Mammary epithelial cell (primary cell): ENCODE measurements at regions of chr16 and their contacts with region 1.

Region 1: GRCh38 chr16:21708533-21709115 is 44.9 kb downstream of the OTOA start:
- DNase-seq: peak; percentile 60
- H3K4me3 ChIP-seq: no peak overlapping the region
- H3K27ac ChIP-seq: no peak overlapping the region
- H3K4me1 ChIP-seq: peaks cover 9% of the 10 kb centered on the region
- H3K27me3 ChIP-seq: no peaks in the 10 kb centered on the region
- CTCF ChIP-seq: peak; percentile 81 to 89

Region 2: GRCh38 chr16:21584817-21585216 is 123.8 kb before region 1 on chr16:
- CTCF ChIA-PET with region 1: no interaction called
- dilution Hi-C with region 1: no loop called
- in situ Hi-C with region 1: loop called (anchors 10 kb)
- intact Hi-C with region 1: loop called (anchors 1 kb)
- DNase-seq: no peak
- H3K4me3 ChIP-seq: no peak overlapping the region
- H3K27ac ChIP-seq: no peak overlapping the region
- H3K4me1 ChIP-seq: no peaks in the 10 kb centered on the region
- H3K27me3 ChIP-seq: no peaks in the 10 kb centered on the region
- CTCF ChIP-seq: no peak

Region 3: DNA sequence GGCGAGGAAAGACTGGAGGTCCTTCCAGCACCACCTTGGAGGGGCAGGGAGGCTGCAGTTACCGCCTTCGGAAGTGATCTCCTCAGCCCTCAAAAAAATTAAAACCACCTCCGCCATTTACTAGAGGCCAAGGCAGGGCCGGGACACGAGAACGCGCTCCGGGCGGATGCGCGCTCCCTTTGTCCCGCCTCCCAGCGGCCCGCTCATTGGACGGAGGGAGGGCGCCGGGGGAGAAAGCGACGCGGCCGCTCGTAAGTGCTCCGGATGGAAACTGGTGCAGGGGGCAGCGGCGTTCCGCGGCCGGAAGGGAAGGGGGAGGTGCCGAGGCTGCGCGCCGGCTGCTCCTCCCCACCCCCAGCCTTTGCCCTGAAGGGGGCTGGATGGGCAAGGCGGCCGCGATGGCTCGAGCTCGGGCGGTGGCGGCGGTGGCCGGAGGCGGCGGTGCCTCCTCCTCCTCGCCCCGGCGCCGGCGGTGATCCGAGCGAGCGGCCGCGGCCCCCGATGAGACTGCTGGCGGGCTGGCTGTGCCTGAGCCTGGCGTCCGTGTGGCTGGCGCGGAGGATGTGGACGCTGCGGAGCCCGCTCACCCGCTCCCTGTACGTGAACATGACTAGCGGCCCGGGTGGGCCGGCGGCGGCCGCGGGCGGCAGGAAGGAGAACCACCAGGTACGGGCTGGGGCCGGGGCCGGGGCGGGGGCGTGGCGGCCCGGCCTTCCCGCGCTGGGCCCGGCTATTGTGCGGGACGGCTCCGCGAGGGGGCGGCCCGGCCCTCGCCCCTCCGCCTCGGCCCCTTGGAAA is 109.2 kb before region 1 on chr16 and contains the start of gene METTL9:
- CTCF ChIA-PET with region 1: no interaction called
- dilution Hi-C with region 1: no loop called
- in situ Hi-C with region 1: no loop called
- intact Hi-C with region 1: loop called (anchors 5 kb)
- DNase-seq: peak; percentile 94
- H3K4me3 ChIP-seq: peak within 1 kb of the TSS; percentile 70 to 92 (median 78)
- H3K27ac ChIP-seq: peak within 1 kb of the TSS; percentile 73
- H3K4me1 ChIP-seq: peaks cover 12% of the 10 kb centered on the region
- H3K27me3 ChIP-seq: no peaks in the 10 kb centered on the region
- CTCF ChIP-seq: no peak
- total RNA-seq, gene METTL9: 86.1 to 131 TPM

Region 4: GRCh38 chr16:21646721-21647561 is 61.7 kb before region 1 on chr16:
- CTCF ChIA-PET with region 1: no interaction called
- dilution Hi-C with region 1: loop called (anchors 5 kb)
- in situ Hi-C with region 1: no loop called
- intact Hi-C with region 1: loop called (anchors 5 kb)
- DNase-seq: peak; percentile 72
- H3K4me3 ChIP-seq: no peak overlapping the region
- H3K27ac ChIP-seq: no peak overlapping the region
- H3K4me1 ChIP-seq: no peaks in the 10 kb centered on the region
- H3K27me3 ChIP-seq: no peaks in the 10 kb centered on the region
- CTCF ChIP-seq: no peak

Region 5: GRCh38 chr16:21656795-21657768 is 51.5 kb before region 1 on chr16:
- CTCF ChIA-PET with region 1: no interaction called
- dilution Hi-C with region 1: no loop called
- in situ Hi-C with region 1: no loop called
- intact Hi-C with region 1: loop called (anchors 1 kb)
- DNase-seq: peak; percentile 30
- H3K4me3 ChIP-seq: no peak overlapping the region
- H3K27ac ChIP-seq: no peak overlapping the region
- H3K4me1 ChIP-seq: peaks cover 23% of the 10 kb centered on the region
- H3K27me3 ChIP-seq: no peaks in the 10 kb centered on the region
- CTCF ChIP-seq: peak; percentile 69 to 85

Region 6: GRCh38 chr16:21673469-21673868 is 35.2 kb before region 1 on chr16:
- CTCF ChIA-PET with region 1: no interaction called
- dilution Hi-C with region 1: no loop called
- in situ Hi-C with region 1: no loop called
- intact Hi-C with region 1: no loop called
- DNase-seq: no peak
- H3K4me3 ChIP-seq: no peak overlapping the region
- H3K27ac ChIP-seq: no peak overlapping the region
- H3K4me1 ChIP-seq: no peaks in the 10 kb centered on the region
- H3K27me3 ChIP-seq: no peaks in the 10 kb centered on the region
- CTCF ChIP-seq: no peak

Region 7: DNA sequence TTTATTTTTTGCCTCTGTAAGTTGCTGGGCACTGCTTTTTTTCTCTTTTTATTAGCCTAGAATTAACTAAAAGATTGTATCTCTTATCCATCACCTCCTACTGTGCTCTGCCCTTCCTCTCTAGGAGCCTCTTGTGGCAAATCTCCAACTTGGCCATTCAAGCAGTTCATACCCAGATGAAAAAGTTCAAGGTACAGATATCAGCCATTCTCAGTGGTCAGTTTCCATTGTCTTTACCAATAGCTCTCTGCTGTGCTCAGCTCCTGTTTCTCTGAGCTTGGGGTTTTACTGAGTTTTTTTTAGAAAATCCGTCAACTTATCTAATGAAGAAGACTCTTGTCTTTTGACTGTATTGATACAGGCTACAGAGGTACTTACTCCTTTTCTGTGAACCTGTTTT is 314.9 kb after region 1 on chr16:
- CTCF ChIA-PET with region 1: no interaction called
- dilution Hi-C with region 1: no loop called
- in situ Hi-C with region 1: no loop called
- intact Hi-C with region 1: no loop called
- DNase-seq: no peak
- H3K4me3 ChIP-seq: no peak overlapping the region
- H3K27ac ChIP-seq: peak overlapping the region; percentile 1
- H3K4me1 ChIP-seq: peaks cover 49% of the 10 kb centered on the region
- H3K27me3 ChIP-seq: no peaks in the 10 kb centered on the region
- CTCF ChIP-seq: no peak